HepG2 (cell line): ENCODE measurements at regions of chr18 and their contacts with region 1.

Region 1: DNA sequence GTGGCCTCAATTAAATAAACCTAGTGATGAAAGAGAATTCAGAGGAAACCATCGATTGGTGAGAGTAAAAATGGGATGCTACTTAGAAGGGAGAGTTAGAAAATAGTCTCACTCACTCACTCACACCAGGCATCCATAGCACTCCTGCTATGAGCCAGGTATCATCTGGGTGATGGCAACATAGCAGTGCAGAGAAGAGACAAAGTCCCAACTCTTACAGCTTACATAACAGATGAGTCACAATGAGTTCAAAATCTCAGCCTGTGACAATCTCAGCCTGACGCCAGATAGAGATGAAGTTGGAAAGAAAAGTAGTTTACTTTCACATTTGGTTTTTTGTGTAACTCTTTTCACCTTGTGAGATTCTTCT is 55.4 kb upstream of the THOC1 start:
- DNase-seq: peak; percentile 87
- ATAC-seq: peak; percentile 92
- H3K4me3 ChIP-seq: no peak overlapping the region
- H3K27ac ChIP-seq: no peak overlapping the region
- H3K4me1 ChIP-seq: peaks cover 25% of the 10 kb centered on the region
- H3K27me3 ChIP-seq: no peaks in the 10 kb centered on the region
- CTCF ChIP-seq: no peak
- EP300 ChIP-seq: peak in 1 of 2 experiments; percentile 56; a peak in 1 of 4 replicates
- POLR2A ChIP-seq: no peak
- RAD21 ChIP-seq: no peak

Region 2: DNA sequence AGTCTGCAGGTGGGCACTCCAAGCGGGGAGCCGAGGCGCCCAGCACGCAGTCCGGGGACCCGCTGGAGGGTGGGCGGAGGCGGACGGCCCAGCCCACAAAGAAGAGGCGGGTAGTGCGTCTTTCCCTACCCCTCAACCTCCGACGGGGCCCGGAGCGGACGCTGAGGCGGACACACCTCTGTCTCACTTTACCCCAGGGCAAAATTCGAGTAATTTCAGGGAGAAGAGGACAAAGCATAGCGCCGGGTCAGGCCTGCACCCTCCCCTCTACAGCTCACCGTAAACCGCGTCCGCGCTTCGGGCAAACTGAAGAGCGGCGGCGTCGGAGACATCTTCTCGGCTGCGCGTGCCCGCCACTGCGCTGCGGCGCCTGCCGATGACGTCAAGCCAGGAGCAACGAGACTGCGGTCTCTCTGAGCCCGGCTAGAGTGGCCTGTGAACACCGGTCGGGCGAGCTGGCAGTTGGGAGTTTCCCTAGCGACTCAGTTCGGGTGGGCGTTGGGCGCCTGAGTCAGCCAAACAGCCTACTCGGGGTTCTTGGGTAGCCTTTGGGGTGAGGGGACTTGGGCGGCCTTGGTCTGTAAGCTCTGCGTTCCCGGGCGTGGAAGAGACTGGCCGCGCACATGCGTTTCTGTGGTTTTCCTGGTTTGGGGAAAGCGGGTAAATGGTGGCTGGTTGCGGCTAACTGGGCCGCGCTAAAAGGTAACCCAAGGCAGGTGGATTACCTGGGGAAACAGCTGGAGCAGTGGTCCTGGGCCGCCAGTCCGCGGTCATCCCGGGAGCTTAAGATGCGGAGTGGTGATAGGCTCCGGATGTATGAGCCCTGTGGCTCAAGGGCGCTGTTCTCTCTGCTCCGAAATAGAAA is 55.3 kb before region 1 on chr18 and contains the start of gene THOC1:
- CTCF ChIA-PET with region 1: no interaction called
- POLR2A ChIA-PET with region 1: no interaction called
- in situ Hi-C with region 1: no loop called
- intact Hi-C with region 1: loop called (anchors 1 kb)
- DNase-seq: peak; percentile 82
- ATAC-seq: peak; percentile 91
- H3K4me3 ChIP-seq: peak within 1 kb of the TSS; percentile 89 to 100 (median 97)
- H3K27ac ChIP-seq: peak within 1 kb of the TSS; percentile 93
- H3K4me1 ChIP-seq: peaks cover 33% of the 10 kb centered on the region
- H3K27me3 ChIP-seq: no peaks in the 10 kb centered on the region; a peak in 1 of 5 replicates
- CTCF ChIP-seq: peak; percentile 37
- EP300 ChIP-seq: no peak
- POLR2A ChIP-seq: peak; percentile 91; a peak in 3 of 4 replicates
- RAD21 ChIP-seq: peak; percentile 30; the same call in 1 of the 2 replicates
- total RNA-seq, gene THOC1: 47.3 and 56.7 TPM in 2 replicates

Region 3: DNA sequence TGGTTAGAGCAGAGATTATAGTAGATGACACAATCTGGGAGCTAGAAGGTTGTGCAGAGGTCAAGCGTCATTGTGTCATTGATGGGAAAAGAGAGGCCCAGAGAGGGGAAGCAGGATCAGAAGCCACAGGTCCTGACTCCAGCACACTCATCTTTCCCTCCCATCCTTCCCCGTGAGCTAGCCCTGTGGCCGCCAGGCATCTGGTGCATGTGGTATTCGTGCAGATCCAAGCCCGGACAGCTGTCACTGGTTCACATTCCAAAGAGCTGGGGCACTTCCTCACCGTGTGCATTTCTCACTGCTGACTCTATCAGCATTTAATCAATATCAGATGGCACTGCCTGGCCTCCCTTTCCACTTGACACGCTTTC is 38.7 kb after region 1 on chr18:
- CTCF ChIA-PET with region 1: no interaction called
- POLR2A ChIA-PET with region 1: interaction called, 3 read pairs
- in situ Hi-C with region 1: no loop called
- intact Hi-C with region 1: loop called (anchors 2 kb)
- DNase-seq: peak; percentile 89
- ATAC-seq: peak; percentile 96
- H3K4me3 ChIP-seq: peak overlapping the region; percentile 27 to 57 (median 32); a peak in 4 of 6 replicates
- H3K27ac ChIP-seq: peak overlapping the region; percentile 94
- H3K4me1 ChIP-seq: peaks cover 50% of the 10 kb centered on the region
- H3K27me3 ChIP-seq: no peaks in the 10 kb centered on the region
- CTCF ChIP-seq: no peak
- EP300 ChIP-seq: peak; percentile 31 to 62; a peak in 2 of 4 replicates
- POLR2A ChIP-seq: no peak; a peak in 1 of 4 replicates
- RAD21 ChIP-seq: no peak

Region 4: GRCh38 chr18:477565-477964 is 154.3 kb after region 1 on chr18:
- CTCF ChIA-PET with region 1: no interaction called
- POLR2A ChIA-PET with region 1: no interaction called
- in situ Hi-C with region 1: no loop called
- intact Hi-C with region 1: loop called (anchors 5 kb)
- DNase-seq: peak; percentile 27
- ATAC-seq: peak; percentile 65; the same call in 2 of the 3 replicates
- H3K4me3 ChIP-seq: no peak overlapping the region
- H3K27ac ChIP-seq: no peak overlapping the region
- H3K4me1 ChIP-seq: peaks cover 66% of the 10 kb centered on the region
- H3K27me3 ChIP-seq: peaks cover 0 to 4% of the 10 kb centered on the region in 2 experiments; a peak in 2 of 5 replicates
- CTCF ChIP-seq: peak; percentile 66
- EP300 ChIP-seq: no peak
- POLR2A ChIP-seq: no peak
- RAD21 ChIP-seq: peak; percentile 25; the same call in 1 of the 2 replicates

Region 5: GRCh38 chr18:693466-694187 is 370.4 kb after region 1 on chr18:
- CTCF ChIA-PET with region 1: no interaction called
- POLR2A ChIA-PET with region 1: no interaction called
- in situ Hi-C with region 1: no loop called
- intact Hi-C with region 1: no loop called
- DNase-seq: no peak
- ATAC-seq: no peak
- H3K4me3 ChIP-seq: no peak overlapping the region
- H3K27ac ChIP-seq: no peak overlapping the region
- H3K4me1 ChIP-seq: no peaks in the 10 kb centered on the region
- H3K27me3 ChIP-seq: no peaks in the 10 kb centered on the region
- CTCF ChIP-seq: no peak
- EP300 ChIP-seq: no peak
- POLR2A ChIP-seq: no peak
- RAD21 ChIP-seq: no peak